KBM-7 (cell line): ENCODE measurements at regions of chr6 and their contacts with region 1.

Region 1: DNA sequence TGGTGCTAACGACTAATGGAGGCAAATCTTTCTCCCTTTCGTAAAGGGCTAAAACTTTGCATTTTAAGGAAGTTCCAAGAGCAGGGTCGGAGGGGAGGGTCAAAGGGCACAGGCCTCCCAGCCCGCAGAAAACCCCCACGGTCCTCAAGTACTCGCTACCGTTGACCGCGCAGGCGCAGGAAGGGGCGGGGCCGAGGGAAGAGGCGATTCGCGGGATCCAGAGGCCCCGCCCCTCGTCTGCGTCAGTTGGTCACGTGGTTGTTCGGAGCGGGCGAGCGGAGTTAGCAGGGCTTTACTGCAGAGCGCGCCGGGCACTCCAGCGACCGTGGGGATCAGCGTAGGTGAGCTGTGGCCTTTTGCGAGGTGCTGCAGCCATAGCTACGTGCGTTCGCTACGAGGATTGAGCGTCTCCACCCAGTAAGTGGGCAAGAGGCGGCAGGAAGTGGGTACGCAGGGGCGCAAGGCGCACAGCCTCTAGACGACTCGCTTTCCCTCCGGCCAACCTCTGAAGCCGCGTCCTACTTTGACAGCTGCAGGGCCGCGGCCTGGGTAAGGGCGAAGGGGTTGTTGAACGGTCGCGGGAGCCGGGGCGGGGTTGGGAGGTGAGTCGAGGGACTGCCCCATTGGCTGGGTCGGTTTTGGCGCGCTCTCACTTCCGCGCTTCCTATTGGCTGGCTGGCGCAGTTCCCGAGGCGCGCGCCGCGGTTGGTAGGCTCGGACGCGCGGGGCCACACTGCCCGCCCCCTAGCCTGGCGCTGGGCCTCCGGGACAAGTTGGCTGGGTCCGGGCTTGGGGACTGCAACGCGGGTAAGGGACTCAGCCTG is at the start of gene GMNN:
- DNase-seq: peak; percentile 96

Region 2: DNA sequence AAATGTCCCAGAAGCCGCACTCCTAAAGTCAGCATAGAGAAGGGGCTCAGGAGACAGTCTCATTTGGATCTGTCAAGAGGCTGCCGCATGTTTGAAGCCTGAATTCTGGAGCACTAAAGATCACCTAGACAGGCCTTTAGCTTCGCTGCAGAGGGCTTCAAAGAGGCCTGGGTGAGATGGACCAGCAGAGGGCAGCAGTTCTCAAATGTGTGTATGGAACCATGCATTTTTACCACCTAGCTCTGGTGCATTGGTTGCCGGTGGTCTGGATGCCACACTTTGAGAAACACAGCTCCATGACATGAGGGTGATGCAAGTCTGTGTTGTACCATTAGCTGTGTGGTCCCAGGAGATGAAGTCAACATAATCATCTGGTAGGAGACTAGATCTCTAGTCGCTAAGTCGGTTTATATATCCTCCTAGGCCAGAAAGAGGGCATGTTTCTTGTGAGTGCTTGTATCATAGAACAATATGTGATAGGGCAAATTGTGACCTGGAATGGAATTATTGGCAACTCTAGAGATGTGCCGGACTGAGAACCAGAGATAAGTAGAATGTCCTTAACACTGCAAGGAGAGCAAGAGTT is 193.7 kb before region 1 on chr6:
- in situ Hi-C with region 1: loop called (anchors 25 kb)
- DNase-seq: peak; percentile 73